ENCODE measurements at regions of chr9 and their contacts with region 1.

Region 1: DNA sequence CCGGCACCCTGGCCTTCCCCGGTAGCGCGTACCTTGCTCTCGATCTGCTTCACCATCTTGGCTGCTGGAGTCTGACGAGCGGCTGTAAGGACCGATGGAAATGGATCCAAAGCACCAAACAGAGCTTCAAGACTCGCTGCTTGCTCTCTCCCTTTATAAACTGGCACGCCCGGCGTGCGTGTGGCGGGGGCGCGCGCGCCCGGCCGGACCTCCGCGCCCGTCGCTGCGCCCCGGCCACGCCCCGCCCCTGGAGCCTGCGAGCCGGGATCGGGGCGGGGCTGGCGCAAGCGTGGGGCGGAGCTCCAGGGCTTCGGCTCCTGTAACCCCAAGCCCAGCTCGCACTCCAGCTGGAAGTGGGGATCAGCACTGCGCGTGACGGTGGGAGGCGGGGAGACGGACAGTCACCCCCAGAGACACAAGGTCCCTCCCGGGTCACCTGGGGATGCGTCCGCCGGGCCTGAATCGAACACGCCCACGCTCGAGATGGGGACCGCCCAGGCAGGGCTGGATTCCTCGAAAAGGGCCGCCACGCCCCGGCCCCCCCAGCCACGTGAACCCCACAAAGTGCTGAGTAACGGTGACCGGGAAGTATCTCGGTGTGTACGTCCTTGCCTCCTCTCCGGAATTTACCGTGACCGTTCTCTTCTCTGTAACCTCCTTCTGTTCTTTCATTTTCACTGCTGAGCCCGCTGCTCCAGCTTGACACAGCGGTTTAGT is at the start of gene TXN:
- H3K4me3 Mint-ChIP-seq: peak within 1 kb of the TSS; percentile 98
- H3K27ac Mint-ChIP-seq: peak within 1 kb of the TSS; percentile 96
- H3K4me1 Mint-ChIP-seq: peaks cover 67% of the 10 kb centered on the region
- H3K27me3 Mint-ChIP-seq: no peaks in the 10 kb centered on the region

Region 2: GRCh38 chr9:110058304-110058953 is 198.1 kb before region 1 on chr9:
- intact Hi-C with region 1: no loop called
- H3K4me3 Mint-ChIP-seq: no peak overlapping the region
- H3K27ac Mint-ChIP-seq: peak overlapping the region; percentile 7
- H3K4me1 Mint-ChIP-seq: peaks cover 19% of the 10 kb centered on the region
- H3K27me3 Mint-ChIP-seq: no peaks in the 10 kb centered on the region

Region 3: GRCh38 chr9:110069326-110070248 is 187.0 kb before region 1 on chr9:
- intact Hi-C with region 1: no loop called
- H3K4me3 Mint-ChIP-seq: peak overlapping the region; percentile 49
- H3K27ac Mint-ChIP-seq: peak overlapping the region; percentile 67
- H3K4me1 Mint-ChIP-seq: peaks cover 36% of the 10 kb centered on the region
- H3K27me3 Mint-ChIP-seq: no peaks in the 10 kb centered on the region

Region 4: GRCh38 chr9:110128664-110129329 is 127.7 kb before region 1 on chr9:
- intact Hi-C with region 1: no loop called
- H3K4me3 Mint-ChIP-seq: no peak overlapping the region
- H3K27ac Mint-ChIP-seq: no peak overlapping the region
- H3K4me1 Mint-ChIP-seq: peaks cover 40% of the 10 kb centered on the region
- H3K27me3 Mint-ChIP-seq: no peaks in the 10 kb centered on the region

Region 5: GRCh38 chr9:110320651-110321445 is 64.3 kb after region 1 on chr9:
- intact Hi-C with region 1: loop called (anchors 10 kb)
- H3K4me3 Mint-ChIP-seq: no peak overlapping the region
- H3K27ac Mint-ChIP-seq: no peak overlapping the region
- H3K4me1 Mint-ChIP-seq: peaks cover 13% of the 10 kb centered on the region
- H3K27me3 Mint-ChIP-seq: peaks cover 5% of the 10 kb centered on the region

Region 6: DNA sequence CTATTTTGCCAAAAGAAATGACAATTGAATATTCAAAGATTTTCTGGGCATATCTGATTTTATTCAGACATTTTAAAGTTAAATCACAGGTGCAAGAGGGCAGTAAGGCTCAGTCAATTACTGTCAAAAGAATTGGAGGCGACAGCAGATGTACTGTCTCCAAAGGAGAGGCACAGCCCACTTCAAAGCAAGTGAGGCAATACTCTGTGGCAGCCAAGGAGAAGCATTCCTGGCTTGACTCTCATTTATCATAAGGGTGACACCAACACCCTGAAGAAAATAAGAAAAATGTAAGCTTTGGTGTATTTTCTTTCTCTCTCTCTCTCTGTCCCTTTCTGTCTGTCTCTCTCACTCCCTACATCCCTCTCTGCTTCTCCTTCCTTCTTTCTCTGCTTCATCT is 229.7 kb after region 1 on chr9:
- intact Hi-C with region 1: no loop called
- H3K4me3 Mint-ChIP-seq: no peak overlapping the region
- H3K27ac Mint-ChIP-seq: no peak overlapping the region
- H3K4me1 Mint-ChIP-seq: no peaks in the 10 kb centered on the region
- H3K27me3 Mint-ChIP-seq: peaks cover 16% of the 10 kb centered on the region

Region 7: DNA sequence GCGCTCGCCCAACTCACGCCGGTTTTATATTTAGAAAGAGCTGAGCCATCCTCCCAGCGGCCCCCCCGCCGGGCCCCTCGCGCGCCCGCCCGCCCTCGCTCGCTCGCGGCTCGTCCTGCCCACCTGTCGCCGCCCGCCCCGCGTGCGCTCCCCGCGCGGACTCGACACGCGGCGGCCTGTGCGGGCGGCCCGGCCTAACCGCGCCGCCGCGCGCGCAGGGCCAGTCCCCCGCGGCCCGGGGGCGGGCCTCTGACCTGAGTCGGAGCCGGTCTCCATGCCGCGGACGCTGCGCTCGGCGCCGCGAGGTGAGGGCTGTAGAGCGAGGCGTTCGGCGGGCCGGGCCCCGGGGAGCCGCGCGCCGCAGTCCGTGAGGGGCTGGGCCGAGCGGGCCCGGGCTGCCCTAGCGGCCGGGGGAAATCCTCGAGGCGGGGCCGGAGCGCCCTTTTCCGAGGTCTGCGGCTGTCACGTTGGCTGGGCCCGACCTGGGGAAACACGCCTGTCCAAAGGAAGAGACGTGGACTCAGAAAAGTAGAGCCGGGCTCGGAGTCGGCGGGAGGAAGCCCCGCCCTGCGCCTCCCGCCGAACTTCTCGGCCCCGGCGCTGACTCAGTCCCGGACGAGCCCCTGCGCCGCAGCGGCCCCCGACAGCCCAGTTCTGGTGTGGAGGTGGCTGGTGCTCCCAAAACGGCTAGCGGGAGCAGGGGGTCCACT is 1227.5 kb after region 1 on chr9 and contains the start of gene ECPAS:
- intact Hi-C with region 1: loop called (anchors 10 kb)
- H3K4me3 Mint-ChIP-seq: peak within 1 kb of the TSS; percentile 91
- H3K27ac Mint-ChIP-seq: peak within 1 kb of the TSS; percentile 93
- H3K4me1 Mint-ChIP-seq: peaks cover 24% of the 10 kb centered on the region
- H3K27me3 Mint-ChIP-seq: peaks cover 6% of the 10 kb centered on the region

Measured in dendritic cell treated with granulocyte-macrophage colony-stimulating factor and Interleukin-4, amounts not matched to agents 40 ng/mL and 50 ng/mL, for 4 days (primary cell).